ENCODE measurements at regions of chr22 and their contacts with region 1.

Region 1: DNA sequence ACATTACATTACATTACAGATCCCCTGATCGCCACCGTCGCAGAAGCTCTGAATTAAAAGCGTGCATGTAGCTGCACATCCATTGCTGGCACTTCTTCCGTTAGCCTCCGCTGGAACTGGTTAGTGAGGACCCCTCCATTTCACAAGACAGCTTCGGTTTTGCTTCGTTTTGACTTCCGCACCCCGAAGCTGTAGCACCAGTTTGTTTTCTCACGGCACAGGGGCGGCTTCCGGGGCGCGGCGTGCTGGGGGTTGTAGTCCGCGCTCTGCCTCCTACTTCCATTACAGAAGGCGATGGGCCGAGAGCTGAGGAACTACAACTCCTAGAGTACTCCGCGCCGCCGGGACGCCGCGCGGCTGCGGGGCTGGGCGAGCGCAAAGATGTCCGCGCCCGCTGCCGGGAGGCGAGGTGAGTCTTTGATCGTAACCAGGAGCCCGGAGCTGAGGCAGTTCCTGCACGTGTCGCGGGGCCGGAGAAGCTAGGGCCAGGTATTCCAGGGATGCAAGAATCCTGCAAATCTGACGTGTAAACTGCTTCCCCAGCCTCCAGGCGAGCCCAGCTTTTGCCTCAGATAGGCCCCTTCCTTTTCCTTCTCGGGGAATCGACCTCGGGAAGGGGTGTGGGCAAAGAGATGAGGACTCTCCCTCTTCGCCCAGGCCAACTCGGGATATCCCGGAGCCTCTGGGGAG is at the start of gene PEX26:
- DNase-seq: peak; percentile 97
- ATAC-seq: peak; percentile 99
- H3K4me3 ChIP-seq: peak within 1 kb of the TSS; percentile 70 to 97 (median 92)
- H3K4me3 Mint-ChIP-seq: peak within 1 kb of the TSS; percentile 97
- H3K27ac ChIP-seq: peak within 1 kb of the TSS; percentile 75 to 89
- H3K27ac Mint-ChIP-seq: peak within 1 kb of the TSS; percentile 96
- H3K4me1 ChIP-seq: peaks cover 31 to 32% of the 10 kb centered on the region in 2 donors
- H3K4me1 Mint-ChIP-seq: peaks cover 44% of the 10 kb centered on the region
- H3K27me3 ChIP-seq: no peaks in the 10 kb centered on the region
- H3K27me3 Mint-ChIP-seq: no peaks in the 10 kb centered on the region
- CTCF ChIP-seq: no peak
- total RNA-seq, gene PEX26: 33.4 and 35.4 TPM in 2 replicates

Region 2: DNA sequence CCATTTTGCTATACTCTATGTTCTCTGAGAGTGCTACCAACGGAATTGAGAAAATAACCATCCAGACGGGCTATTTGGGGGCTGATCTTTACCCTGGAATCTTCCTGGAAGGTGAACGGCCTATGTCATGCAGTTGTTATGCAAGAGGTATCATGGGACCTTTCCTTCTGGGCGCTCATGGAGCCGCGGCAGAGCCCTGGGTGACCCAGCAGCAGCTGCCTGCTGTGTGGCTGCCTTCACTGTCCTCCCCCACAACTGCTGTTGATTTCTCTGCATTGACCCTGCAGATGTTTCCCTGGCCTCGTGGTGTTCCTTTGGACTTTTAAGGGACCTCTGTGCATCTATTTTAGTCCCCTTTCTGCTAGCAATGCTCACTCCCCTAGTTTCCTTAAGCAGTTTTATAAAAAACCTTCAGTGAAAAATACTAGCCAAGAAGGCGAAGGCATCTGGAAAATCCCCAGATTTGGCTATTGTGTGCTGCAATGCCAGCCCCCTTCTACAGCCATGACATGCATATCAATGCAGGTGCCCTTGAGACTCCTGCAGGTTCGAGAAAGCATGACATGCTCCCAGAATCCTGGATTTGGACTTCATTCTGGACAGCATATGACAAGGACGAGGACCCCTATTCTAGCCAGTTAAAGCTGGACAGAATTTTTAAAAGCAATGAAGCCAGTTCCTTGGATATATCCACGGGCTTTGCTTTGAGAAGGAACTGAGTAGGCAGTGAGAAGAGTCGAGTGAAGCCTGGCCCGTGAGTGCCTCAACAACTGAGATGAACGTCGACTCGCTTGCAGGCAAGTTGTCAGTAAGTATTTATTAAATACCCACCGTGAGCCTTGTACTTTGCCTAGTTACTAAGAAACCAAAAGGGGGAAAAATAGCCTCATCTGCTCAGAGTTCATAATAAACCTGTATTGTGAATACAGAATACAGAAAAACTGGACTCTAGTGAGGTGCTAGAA is 514.6 kb before region 1 on chr22 and contains the start of gene SLC25A18:
- CTCF ChIA-PET with region 1: no interaction called
- POLR2A ChIA-PET with region 1: no interaction called
- intact Hi-C with region 1: no loop called
- DNase-seq: no peak
- ATAC-seq: no peak
- H3K4me3 ChIP-seq: no peak within 1 kb of the TSS
- H3K4me3 Mint-ChIP-seq: no peak within 1 kb of the TSS
- H3K27ac ChIP-seq: no peak within 1 kb of the TSS
- H3K27ac Mint-ChIP-seq: no peak within 1 kb of the TSS
- H3K4me1 ChIP-seq: no peaks in the 10 kb centered on the region
- H3K4me1 Mint-ChIP-seq: no peaks in the 10 kb centered on the region
- H3K27me3 ChIP-seq: no peaks in the 10 kb centered on the region
- H3K27me3 Mint-ChIP-seq: peaks cover 14% of the 10 kb centered on the region
- CTCF ChIP-seq: no peak
- total RNA-seq, gene SLC25A18: not detected in 2 replicates

Region 3: DNA sequence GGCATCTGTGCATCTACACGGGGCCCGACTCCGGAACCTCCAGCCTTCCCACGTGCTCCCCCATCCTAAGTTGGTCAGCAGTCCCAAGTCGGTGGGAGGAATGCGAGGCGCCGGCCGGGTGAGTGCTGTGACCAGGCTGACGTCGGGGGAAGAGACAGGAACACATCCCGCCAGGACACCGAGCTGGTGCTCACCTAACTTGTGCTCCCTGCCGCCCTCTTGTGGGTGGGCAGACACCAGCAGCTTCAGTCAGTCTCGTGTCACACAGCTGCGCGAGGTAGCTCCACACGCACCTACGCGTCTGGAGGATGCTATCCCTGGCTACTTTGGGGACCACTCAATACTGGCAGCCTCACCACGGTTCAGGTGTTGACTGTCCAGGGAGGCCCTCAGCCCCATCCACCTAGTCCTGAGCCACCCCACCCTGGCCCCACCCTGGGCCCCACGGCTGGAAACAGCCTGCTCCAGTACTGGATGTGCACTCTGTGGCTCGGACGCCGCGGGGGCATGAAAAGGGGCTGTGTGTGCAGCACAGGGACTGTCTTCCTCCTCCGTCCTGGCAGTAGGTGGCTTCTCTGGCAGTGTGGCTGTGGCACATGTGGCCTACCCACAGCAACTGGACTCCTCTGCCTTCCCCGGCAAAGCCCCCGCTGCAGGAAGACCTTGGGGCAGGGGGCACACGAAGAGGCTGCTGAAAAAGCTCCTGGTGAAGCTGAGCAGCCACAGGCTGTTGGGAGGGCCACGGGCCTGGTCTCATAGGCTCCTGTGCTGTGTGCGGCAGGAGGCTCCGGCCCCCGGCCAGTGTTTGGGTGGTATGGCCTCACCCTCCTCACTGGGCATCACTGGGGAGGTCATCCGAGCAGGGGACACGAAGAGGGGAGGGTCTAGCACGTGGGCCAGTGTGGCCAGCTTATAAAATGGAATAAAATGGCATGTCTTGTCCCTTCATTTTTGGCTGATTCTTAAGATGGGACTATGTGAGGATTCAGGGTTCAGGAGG is 292.3 kb before region 1 on chr22:
- CTCF ChIA-PET with region 1: interaction called, 13 read pairs
- POLR2A ChIA-PET with region 1: no interaction called
- intact Hi-C with region 1: no loop called
- DNase-seq: peak; percentile 76
- ATAC-seq: peak; percentile 47
- H3K4me3 ChIP-seq: no peak overlapping the region
- H3K4me3 Mint-ChIP-seq: no peak overlapping the region
- H3K27ac ChIP-seq: peak overlapping the region in 1 of 2 donors; percentile 50
- H3K27ac Mint-ChIP-seq: peak overlapping the region; percentile 37
- H3K4me1 ChIP-seq: peaks cover 11 to 16% of the 10 kb centered on the region in 2 donors
- H3K4me1 Mint-ChIP-seq: peaks cover 22% of the 10 kb centered on the region
- H3K27me3 ChIP-seq: no peaks in the 10 kb centered on the region
- H3K27me3 Mint-ChIP-seq: no peaks in the 10 kb centered on the region
- CTCF ChIP-seq: peak; percentile 77

Region 4: DNA sequence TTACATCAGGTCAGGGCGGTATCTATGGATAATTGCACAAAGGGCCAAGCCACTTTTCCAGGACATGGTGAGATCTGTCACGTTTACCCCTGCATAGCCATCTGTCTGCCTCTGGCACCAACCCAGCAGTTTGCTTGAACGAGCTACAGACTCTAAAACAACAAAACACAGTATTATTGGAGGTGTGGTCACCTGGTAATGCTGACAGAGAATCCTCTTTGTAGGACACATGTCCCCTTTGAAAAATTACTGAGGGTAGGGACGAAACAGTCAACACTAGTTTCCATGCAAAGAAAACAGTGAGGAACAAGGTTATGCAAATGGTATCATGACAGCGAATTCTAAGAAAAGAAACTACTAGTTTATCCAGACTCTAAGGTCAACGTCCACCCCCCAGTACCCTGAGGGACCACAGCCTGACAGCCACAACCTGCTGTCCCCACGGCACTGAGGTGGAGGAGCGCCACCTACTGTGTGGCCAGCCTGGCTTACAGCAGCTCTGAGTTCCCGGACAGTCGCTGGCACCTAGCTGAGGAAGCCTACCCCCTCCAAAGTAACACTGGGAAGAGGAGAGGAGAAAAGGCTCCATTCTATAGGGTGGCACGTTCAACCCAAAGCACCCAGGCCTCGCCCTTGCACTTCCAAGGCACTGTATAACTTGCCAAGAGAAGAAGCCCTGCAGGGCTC is 186.2 kb before region 1 on chr22:
- CTCF ChIA-PET with region 1: interaction called, 21 read pairs
- POLR2A ChIA-PET with region 1: no interaction called
- intact Hi-C with region 1: loop called (anchors 5 kb)
- DNase-seq: no peak
- ATAC-seq: no peak
- H3K4me3 ChIP-seq: no peak overlapping the region
- H3K4me3 Mint-ChIP-seq: no peak overlapping the region
- H3K27ac ChIP-seq: no peak overlapping the region
- H3K27ac Mint-ChIP-seq: no peak overlapping the region
- H3K4me1 ChIP-seq: no peaks in the 10 kb centered on the region
- H3K4me1 Mint-ChIP-seq: peaks cover 1% of the 10 kb centered on the region
- H3K27me3 ChIP-seq: no peaks in the 10 kb centered on the region
- H3K27me3 Mint-ChIP-seq: no peaks in the 10 kb centered on the region
- CTCF ChIP-seq: no peak

Region 5: DNA sequence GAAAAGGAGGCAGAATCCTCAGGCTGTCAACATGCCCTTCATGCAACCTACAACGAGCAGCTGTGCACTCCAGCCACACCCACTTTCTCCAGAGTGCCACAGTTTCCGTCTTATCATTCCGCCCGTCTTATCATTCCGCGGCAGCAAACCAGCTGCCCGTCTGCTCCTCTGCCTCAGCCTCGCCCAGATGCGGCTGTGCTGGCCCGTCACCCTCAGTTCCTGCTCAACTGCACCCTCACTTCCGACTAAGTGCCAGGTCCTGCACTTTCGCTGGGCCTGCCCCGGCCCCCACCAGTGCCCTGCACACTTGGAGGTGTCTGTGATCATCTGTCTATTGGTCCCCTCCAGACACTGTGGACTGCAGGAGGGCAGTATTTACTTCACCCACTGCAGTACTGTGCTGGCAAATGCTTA is 97.1 kb before region 1 on chr22:
- CTCF ChIA-PET with region 1: interaction called, 11 read pairs
- POLR2A ChIA-PET with region 1: no interaction called
- intact Hi-C with region 1: loop called (anchors 5 kb)
- DNase-seq: peak; percentile 66
- ATAC-seq: peak; percentile 79
- H3K4me3 ChIP-seq: peak overlapping the region in 2 of 5 experiments; percentile 19 to 48
- H3K4me3 Mint-ChIP-seq: peak overlapping the region; percentile 86
- H3K27ac ChIP-seq: peak overlapping the region; percentile 63 to 82
- H3K27ac Mint-ChIP-seq: peak overlapping the region; percentile 95
- H3K4me1 ChIP-seq: peaks cover 58 to 82% of the 10 kb centered on the region in 2 donors
- H3K4me1 Mint-ChIP-seq: peaks cover 74% of the 10 kb centered on the region
- H3K27me3 ChIP-seq: no peaks in the 10 kb centered on the region
- H3K27me3 Mint-ChIP-seq: no peaks in the 10 kb centered on the region
- CTCF ChIP-seq: no peak

Region 6: GRCh38 chr22:18044548-18045271 is 33.1 kb before region 1 on chr22:
- CTCF ChIA-PET with region 1: interaction called, 21 read pairs
- POLR2A ChIA-PET with region 1: no interaction called
- intact Hi-C with region 1: no loop called
- DNase-seq: no peak
- ATAC-seq: no peak
- H3K4me3 ChIP-seq: no peak overlapping the region
- H3K4me3 Mint-ChIP-seq: no peak overlapping the region
- H3K27ac ChIP-seq: no peak overlapping the region
- H3K27ac Mint-ChIP-seq: no peak overlapping the region
- H3K4me1 ChIP-seq: peaks cover 0 to 5% of the 10 kb centered on the region in 2 donors
- H3K4me1 Mint-ChIP-seq: peaks cover 6% of the 10 kb centered on the region
- H3K27me3 ChIP-seq: no peaks in the 10 kb centered on the region
- H3K27me3 Mint-ChIP-seq: no peaks in the 10 kb centered on the region
- CTCF ChIP-seq: no peak